PC-9 (cell line): ENCODE measurements at regions of chr7 and their contacts with region 1.

Region 1: DNA sequence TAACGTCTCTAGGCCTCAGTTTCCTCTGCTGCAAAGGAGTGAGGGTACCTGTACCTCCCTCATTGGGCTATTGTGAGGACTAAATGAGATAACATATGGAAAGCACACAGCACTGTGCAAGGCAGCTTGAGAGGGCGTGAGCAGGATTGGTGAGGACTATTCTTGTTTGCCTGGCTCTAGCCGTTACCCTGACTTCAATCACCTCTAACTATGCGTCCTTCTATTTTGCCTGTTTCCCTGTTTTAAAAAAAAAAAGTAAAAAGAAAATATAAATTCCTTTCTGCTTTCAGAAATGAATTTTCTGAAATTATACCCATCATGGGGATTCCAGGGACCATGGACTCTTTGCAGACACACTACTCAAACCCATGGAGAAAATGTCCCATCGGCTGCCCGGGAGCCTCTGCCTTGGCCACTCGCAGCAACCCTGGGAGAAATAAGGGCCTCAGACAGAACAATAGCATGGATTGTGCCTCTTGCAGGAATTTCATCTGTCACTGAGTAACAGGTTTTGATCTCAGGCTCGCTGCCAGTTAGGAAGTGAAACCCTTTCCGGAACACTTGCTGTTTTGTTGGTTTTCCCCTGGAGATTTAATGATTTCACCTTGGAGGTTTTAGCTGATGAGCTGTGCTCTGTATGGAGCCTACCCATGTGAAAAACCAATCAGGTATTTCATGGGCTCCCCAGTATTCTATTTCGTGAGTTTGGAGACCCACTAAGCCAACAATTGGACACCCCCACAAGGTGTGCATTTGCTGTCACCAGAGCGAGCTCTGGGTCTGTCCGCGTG is 55.6 kb downstream of the STEAP1B start:
- DNase-seq: peak in 1 of 2 experiments; percentile 59
- H3K4me3 ChIP-seq: no peak overlapping the region
- H3K27ac ChIP-seq: no peak overlapping the region
- H3K4me1 ChIP-seq: peaks cover 20% of the 10 kb centered on the region
- H3K27me3 ChIP-seq: no peaks in the 10 kb centered on the region
- CTCF ChIP-seq: no peak

Region 2: DNA sequence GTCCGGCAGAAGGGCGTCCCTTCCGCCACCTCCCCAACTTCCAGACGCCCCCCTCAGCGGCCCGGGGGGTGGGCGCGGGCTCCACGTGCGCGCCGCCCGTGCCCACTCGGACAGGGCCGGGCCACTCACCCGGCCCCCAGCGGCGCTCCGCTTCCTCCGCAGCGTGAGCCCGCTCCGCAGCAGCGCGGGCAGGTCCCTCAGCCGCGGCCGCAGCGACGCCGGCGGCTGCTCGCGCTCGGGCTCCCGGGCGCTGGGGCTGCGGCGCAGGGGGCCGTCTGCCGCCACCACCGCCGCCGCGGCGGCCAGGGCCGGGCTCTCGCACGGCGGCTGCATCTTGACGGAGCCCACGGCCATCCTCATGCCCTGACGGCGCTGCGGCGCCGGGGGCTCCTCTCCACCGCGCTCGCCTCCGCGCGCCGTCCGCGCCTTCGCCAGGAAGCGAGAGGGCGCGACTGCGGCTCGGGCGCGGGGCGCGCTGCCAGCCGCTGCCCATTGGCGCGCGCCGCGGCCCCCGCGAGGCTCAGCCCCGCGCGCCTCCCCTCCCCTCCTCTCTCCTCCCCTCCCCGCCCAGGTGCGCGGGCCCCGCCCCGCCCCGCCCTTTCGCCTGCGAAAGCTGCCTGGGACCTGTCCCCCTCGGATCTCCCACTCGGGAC is 87.5 kb before region 1 on chr7 and contains the start of gene RAPGEF5:
- CTCF ChIA-PET with region 1: no interaction called
- POLR2A ChIA-PET with region 1: no interaction called
- intact Hi-C with region 1: loop called (anchors 2 kb)
- DNase-seq: peak in 1 of 2 experiments; percentile 67
- H3K4me3 ChIP-seq: peak within 1 kb of the TSS; percentile 83
- H3K27ac ChIP-seq: no peak within 1 kb of the TSS
- H3K4me1 ChIP-seq: peaks cover 38% of the 10 kb centered on the region
- H3K27me3 ChIP-seq: no peaks in the 10 kb centered on the region
- CTCF ChIP-seq: no peak
- total RNA-seq, gene RAPGEF5: 16.4 and 16.6 TPM in 2 replicates

Region 3: GRCh38 chr7:22390516-22390915 is 53.9 kb before region 1 on chr7:
- CTCF ChIA-PET with region 1: no interaction called
- POLR2A ChIA-PET with region 1: no interaction called
- intact Hi-C with region 1: no loop called
- DNase-seq: no peak
- H3K4me3 ChIP-seq: no peak overlapping the region
- H3K27ac ChIP-seq: no peak overlapping the region
- H3K4me1 ChIP-seq: no peaks in the 10 kb centered on the region
- H3K27me3 ChIP-seq: no peaks in the 10 kb centered on the region
- CTCF ChIP-seq: no peak

Region 4: DNA sequence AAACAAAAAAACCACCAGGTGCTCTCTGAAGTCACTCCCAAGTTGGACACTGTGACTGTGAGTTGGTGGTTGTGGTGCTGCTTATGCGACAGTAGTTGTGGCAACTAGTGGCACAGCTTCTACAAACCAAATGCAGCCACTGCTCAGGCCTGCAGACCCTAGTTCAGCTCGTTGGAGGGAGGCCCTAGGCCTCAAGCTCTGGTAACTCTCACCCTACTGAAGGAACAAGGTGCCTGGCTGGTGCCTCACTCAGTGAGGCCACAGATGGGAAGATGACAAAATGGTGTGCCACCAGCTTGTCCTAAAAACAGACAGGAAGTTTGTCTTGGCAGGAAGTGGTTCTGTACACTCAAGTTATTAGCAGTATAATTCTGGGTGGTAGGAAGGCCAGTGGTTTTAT is 42.1 kb before region 1 on chr7:
- CTCF ChIA-PET with region 1: no interaction called
- POLR2A ChIA-PET with region 1: interaction called, 7 read pairs
- intact Hi-C with region 1: loop called (anchors 5 kb)
- DNase-seq: no peak
- H3K4me3 ChIP-seq: no peak overlapping the region
- H3K27ac ChIP-seq: no peak overlapping the region
- H3K4me1 ChIP-seq: no peaks in the 10 kb centered on the region; the same call in 1 of the 2 replicates
- H3K27me3 ChIP-seq: no peaks in the 10 kb centered on the region
- CTCF ChIP-seq: no peak

Region 5: DNA sequence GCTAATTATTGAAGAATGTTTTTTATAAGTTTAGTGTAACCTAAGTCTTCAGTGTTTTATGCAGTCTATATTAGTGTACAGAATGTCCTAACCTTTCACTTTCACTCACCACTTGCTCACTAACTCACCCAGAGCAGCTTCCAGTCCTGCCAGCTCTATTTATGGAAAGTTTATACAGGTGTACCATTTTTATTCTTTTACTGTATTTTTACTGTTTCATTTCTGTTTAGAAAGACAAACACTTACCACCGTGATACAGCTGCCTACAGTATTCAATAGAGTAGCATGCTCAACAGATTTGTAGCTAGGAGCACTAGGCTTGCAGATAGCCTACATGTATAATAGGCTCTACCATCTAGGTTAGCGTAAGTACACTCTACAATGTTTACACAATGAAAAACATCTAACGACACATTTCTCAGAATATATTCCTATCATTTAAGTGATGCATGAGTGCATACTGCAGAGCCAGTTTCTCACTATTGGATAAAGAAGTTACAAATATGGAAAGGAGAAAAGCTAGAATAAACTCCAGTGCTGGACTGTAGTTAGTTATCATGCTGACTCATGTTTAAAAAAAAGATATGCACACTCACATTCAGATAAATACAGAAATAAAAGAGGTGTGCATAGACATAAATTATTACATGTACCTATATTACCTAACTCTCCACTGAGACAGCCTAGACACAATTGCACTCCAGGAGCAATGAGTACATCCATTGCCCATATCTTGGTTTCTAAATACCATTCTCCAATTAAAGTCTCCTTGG is 25.2 kb after region 1 on chr7:
- CTCF ChIA-PET with region 1: no interaction called
- POLR2A ChIA-PET with region 1: no interaction called
- intact Hi-C with region 1: no loop called
- DNase-seq: no peak
- H3K4me3 ChIP-seq: no peak overlapping the region
- H3K27ac ChIP-seq: no peak overlapping the region
- H3K4me1 ChIP-seq: no peaks in the 10 kb centered on the region
- H3K27me3 ChIP-seq: no peaks in the 10 kb centered on the region
- CTCF ChIP-seq: no peak